Activated T-helper 1 cell treated with anti-CD3 and anti-CD28 coated beads, Interleukin-12 subunit alpha, Interleukin-12 subunit beta, Interleukin-2, Interleukin-4 antibody, amounts not matched to agents 30 ng/mL and 10 ng/mL and 1 ng/mL, durations not matched to agents 14 hours and 24 hours and 36 hours (primary cell): ENCODE measurements at regions of chr3 and their contacts with region 1.

Region 1: GRCh38 chr3:32177702-32178198 is 60.7 kb upstream of the CMTM8 start:
- DNase-seq: peak; percentile 37
- H3K4me3 Mint-ChIP-seq: no peak overlapping the region
- H3K27ac Mint-ChIP-seq: no peak overlapping the region
- H3K4me1 Mint-ChIP-seq: peaks cover 12% of the 10 kb centered on the region
- H3K27me3 Mint-ChIP-seq: peaks cover 5% of the 10 kb centered on the region

Region 2: GRCh38 chr3:32302601-32303398 is 125.0 kb after region 1 on chr3:
- intact Hi-C with region 1: no loop called
- DNase-seq: no peak
- H3K4me3 Mint-ChIP-seq: peak overlapping the region; percentile 48
- H3K27ac Mint-ChIP-seq: peak overlapping the region; percentile 85
- H3K4me1 Mint-ChIP-seq: peaks cover 70% of the 10 kb centered on the region
- H3K27me3 Mint-ChIP-seq: no peaks in the 10 kb centered on the region

Region 3: GRCh38 chr3:32334675-32335074 is 156.9 kb after region 1 on chr3:
- intact Hi-C with region 1: loop called (anchors 1 kb)
- DNase-seq: peak; percentile 45
- H3K4me3 Mint-ChIP-seq: no peak overlapping the region
- H3K27ac Mint-ChIP-seq: no peak overlapping the region
- H3K4me1 Mint-ChIP-seq: peaks cover 55% of the 10 kb centered on the region
- H3K27me3 Mint-ChIP-seq: no peaks in the 10 kb centered on the region

Region 4: GRCh38 chr3:32340039-32340438 is 162.3 kb after region 1 on chr3:
- intact Hi-C with region 1: loop called (anchors 1 kb)
- DNase-seq: peak; percentile 20
- H3K4me3 Mint-ChIP-seq: no peak overlapping the region
- H3K27ac Mint-ChIP-seq: no peak overlapping the region
- H3K4me1 Mint-ChIP-seq: peaks cover 27% of the 10 kb centered on the region
- H3K27me3 Mint-ChIP-seq: no peaks in the 10 kb centered on the region

Region 5: GRCh38 chr3:32467333-32468070 is 289.8 kb after region 1 on chr3:
- intact Hi-C with region 1: loop called (anchors 2 kb)
- DNase-seq: peak; percentile 68
- H3K4me3 Mint-ChIP-seq: no peak overlapping the region
- H3K27ac Mint-ChIP-seq: no peak overlapping the region
- H3K4me1 Mint-ChIP-seq: peaks cover 54% of the 10 kb centered on the region
- H3K27me3 Mint-ChIP-seq: no peaks in the 10 kb centered on the region

Region 6: GRCh38 chr3:32667122-32667521 is 489.4 kb after region 1 on chr3:
- intact Hi-C with region 1: loop called (anchors 2 kb)
- DNase-seq: no peak
- H3K4me3 Mint-ChIP-seq: no peak overlapping the region
- H3K27ac Mint-ChIP-seq: no peak overlapping the region
- H3K4me1 Mint-ChIP-seq: no peaks in the 10 kb centered on the region
- H3K27me3 Mint-ChIP-seq: peaks cover 15% of the 10 kb centered on the region